PC-9 (cell line): ENCODE measurements at regions of chr13 and their contacts with region 1.

Region 1: DNA sequence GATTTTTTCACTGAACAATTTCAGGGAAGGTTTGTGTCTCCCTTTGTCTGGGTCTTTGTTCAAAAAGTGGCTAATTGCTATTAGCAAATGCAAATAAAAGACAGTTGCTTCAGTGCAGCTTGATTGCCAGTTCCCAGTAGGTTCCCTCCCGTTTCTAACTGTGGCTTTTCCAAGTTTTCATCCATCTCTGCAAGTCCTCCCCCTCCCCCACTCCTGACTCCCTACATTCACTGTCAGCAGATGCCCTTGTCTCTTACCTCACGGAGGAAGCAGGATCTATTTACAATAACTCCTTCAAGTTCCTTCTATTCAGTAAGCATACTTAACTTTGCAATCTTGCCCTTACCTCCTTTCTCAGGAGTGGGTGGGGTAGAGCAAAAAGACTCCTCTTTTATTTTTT is 55.4 kb upstream of the SCEL start:
- DNase-seq: no peak
- H3K4me3 ChIP-seq: no peak overlapping the region
- H3K27ac ChIP-seq: no peak overlapping the region
- H3K4me1 ChIP-seq: peaks cover 11% of the 10 kb centered on the region
- H3K27me3 ChIP-seq: no peaks in the 10 kb centered on the region
- CTCF ChIP-seq: no peak

Region 2: GRCh38 chr13:77335543-77335942 is 144.5 kb before region 1 on chr13:
- CTCF ChIA-PET with region 1: interaction called, 14 read pairs
- POLR2A ChIA-PET with region 1: no interaction called
- intact Hi-C with region 1: no loop called
- DNase-seq: no peak
- H3K4me3 ChIP-seq: no peak overlapping the region
- H3K27ac ChIP-seq: no peak overlapping the region
- H3K4me1 ChIP-seq: peaks cover 10% of the 10 kb centered on the region; the same call in 1 of the 2 replicates
- H3K27me3 ChIP-seq: no peaks in the 10 kb centered on the region
- CTCF ChIP-seq: no peak